GM13977 (cell line): ENCODE measurements at regions of chr11 and their contacts with region 1.

Region 1: DNA sequence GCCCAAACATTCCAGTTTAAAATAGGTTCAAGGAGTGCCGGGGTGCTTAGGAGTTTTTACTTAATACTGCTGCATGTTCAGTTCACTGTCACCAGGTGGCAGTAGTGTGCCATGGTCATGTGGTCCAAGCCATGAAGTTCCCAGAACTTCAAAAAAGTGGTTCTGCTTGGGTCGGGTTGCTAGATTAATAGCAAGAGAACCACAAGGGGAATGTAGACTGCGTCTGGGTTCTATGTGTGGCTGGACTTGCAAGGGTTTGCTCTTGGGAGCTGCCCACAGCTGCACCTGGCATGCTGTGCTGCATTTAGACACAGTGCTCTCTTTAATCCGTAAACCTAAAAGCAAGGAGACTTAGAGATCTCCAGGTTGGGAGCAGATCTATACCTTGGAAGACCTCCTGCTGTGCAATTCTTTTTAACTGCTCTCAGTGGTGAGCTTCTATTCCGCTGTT is 6.5 kb upstream of the SPON1 start:
- DNase-seq: peak; percentile 41
- CTCF ChIP-seq: peak; percentile 82

Region 2: DNA sequence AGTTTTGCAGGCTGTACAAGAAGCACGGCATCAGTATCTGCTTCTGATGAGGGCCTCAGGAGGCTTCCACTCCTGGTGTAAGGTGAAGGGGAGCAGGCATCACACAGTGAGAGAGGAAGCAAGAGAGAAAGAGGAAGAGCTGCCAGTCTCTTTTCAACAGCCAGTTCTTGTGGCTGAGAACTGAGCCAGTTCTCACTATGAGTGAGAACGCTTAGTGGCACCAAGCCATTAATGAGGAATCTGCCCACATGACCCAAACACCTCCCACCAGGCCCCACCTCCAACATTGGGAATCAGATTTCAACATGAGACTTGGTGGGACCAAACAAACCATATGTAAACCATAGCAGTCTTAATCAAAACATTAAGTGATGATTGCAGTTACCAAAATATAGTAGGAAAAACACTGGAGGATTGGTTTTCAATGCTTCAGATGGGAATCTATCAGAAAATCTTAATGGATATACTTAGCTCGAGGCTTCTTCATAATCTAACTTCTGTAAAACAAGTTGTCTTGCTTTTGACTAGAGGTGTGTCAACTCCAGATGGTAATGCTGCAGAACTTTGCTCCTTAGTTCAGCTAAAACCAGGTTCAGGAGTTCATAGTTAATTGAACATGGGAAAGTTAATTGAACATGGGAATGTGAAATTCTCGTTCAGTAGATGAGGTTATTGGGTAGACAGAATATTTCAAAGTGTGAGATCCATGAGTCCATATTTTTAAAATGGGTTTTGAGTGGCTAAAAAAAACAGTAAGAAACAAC is 275.3 kb before region 1 on chr11:
- in situ Hi-C with region 1: no loop called
- DNase-seq: no peak
- CTCF ChIP-seq: no peak

Region 3: DNA sequence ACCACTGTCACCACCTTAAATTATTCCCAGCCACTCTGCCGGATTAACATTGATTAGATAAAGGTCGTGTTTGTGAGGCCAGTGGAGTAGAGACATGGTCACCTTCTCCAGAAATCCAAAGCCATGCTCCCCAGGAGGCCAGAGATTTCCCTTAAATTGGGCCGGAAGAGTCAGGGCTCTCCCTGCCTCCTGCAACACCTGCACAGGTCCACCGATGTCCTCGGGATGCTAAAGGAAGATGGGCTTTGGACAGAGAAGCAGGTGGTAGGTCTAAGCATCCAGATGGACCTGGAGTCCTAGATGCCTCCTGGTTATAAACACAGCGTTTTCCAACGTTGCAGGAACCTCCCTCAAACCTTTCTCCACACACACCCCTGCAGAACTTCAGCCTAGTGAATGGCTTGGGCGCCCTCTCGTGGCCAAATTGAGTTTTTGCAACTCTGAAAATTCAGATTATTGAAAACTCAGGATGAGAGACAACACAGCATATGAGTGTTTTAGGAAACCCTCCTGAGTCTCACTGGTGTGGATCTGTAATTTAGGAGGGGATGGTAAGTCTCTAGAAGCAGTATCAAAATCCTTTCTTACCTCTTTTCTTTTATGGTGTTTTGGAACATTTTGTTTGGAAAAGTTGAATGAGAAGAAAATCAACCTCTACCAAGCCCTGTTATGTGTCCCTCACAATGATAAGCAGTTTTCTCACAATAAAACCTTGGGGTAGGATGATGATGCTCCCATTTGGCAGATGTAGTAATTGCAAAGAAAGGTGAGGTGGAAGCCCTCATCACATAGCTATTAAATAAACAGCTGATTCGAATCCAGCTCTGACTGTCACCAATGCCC is 293.3 kb after region 1 on chr11:
- in situ Hi-C with region 1: loop called (anchors 5 kb)
- DNase-seq: peak; percentile 54
- CTCF ChIP-seq: peak; percentile 77

Region 4: DNA sequence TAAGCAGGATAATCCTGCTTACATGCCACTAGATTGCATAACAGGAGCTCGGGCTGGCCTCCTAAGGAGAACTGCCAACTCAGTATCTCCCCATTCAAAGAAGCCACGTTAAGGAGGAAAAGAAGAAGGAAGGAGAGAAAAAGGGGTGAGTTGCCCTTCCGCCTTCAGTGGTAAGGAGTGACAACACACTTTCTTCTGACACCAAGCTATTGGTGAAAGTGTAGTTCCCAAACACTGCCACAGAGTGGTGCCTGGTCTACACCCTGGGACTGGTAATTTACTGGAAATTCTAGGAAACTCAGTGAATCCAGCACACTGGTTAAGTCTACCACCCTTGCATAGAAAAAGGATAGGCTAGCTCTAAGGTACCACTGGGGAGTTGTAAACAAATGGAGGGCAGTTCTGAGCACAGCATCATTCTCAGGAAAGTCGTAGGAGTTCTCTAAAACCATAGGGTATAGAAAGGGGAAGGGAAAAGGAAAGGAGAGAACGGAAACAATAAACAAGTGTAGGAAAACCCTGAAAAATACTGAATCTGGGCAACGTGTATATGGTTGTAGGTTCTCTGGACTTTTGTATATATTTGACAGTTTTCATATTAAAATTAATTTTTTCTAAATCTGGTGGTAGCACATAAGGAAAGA is 344.8 kb after region 1 on chr11:
- in situ Hi-C with region 1: no loop called
- DNase-seq: peak; percentile 33
- CTCF ChIP-seq: peak; percentile 77

Region 5: GRCh38 chr11:14443638-14444037 is 487.6 kb after region 1 on chr11:
- in situ Hi-C with region 1: loop called (anchors 25 kb)
- DNase-seq: no peak
- CTCF ChIP-seq: no peak